Naive thymus-derived CD4-positive, alpha-beta T cell (primary cell): ENCODE measurements at regions of chr6 and their contacts with region 1.

Region 1: GRCh38 chr6:24933868-24934401 is 1.8 kb downstream of the RIPOR2 start:
- DNase-seq: peak in 7 of 9 donors; percentile 59 to 78 (median 72)
- ATAC-seq: peak; percentile 52
- H3K4me3 ChIP-seq: peak overlapping the region; percentile 89
- H3K4me3 Mint-ChIP-seq: peak overlapping the region; percentile 89 to 100 (median 98)
- H3K27ac ChIP-seq: peak overlapping the region; percentile 85
- H3K27ac Mint-ChIP-seq: peak overlapping the region; percentile 88 to 99 (median 93)
- H3K4me1 ChIP-seq: peaks cover 37 to 44% of the 10 kb centered on the region in 2 donors
- H3K4me1 Mint-ChIP-seq: peaks cover 44 to 65% (median 50%) of the 10 kb centered on the region in 7 donors
- H3K27me3 ChIP-seq: no peaks in the 10 kb centered on the region
- H3K27me3 Mint-ChIP-seq: no peaks in the 10 kb centered on the region

Region 2: GRCh38 chr6:24855395-24856245 is 78.3 kb before region 1 on chr6:
- CTCF ChIA-PET with region 1: interaction called, 40 read pairs
- POLR2A ChIA-PET with region 1: interaction called, 94 read pairs
- intact Hi-C with region 1: loop called (anchors 1 kb)
- DNase-seq: peak; percentile 25 to 83 (median 74)
- ATAC-seq: peak; percentile 78
- H3K4me3 ChIP-seq: no peak overlapping the region
- H3K4me3 Mint-ChIP-seq: peak overlapping the region in 8 of 10 donors; percentile 48 to 89 (median 62)
- H3K27ac ChIP-seq: peak overlapping the region; percentile 72
- H3K27ac Mint-ChIP-seq: peak overlapping the region; percentile 86 to 99 (median 94)
- H3K4me1 ChIP-seq: peaks cover 47 to 59% of the 10 kb centered on the region in 2 donors
- H3K4me1 Mint-ChIP-seq: peaks cover 51 to 72% (median 66%) of the 10 kb centered on the region in 7 donors
- H3K27me3 ChIP-seq: no peaks in the 10 kb centered on the region
- H3K27me3 Mint-ChIP-seq: no peaks in the 10 kb centered on the region

Region 3: GRCh38 chr6:24910961-24911712 is 22.8 kb before region 1 on chr6:
- CTCF ChIA-PET with region 1: interaction called, 53 read pairs
- POLR2A ChIA-PET with region 1: interaction called, 644 read pairs
- intact Hi-C with region 1: loop called (anchors 1 to 2 kb)
- DNase-seq: peak in 6 of 9 donors; percentile 37 to 67 (median 56)
- ATAC-seq: peak; percentile 60
- H3K4me3 ChIP-seq: peak overlapping the region; percentile 41
- H3K4me3 Mint-ChIP-seq: peak overlapping the region; percentile 92 to 97 (median 96)
- H3K27ac ChIP-seq: peak overlapping the region; percentile 75
- H3K27ac Mint-ChIP-seq: peak overlapping the region; percentile 88 to 99 (median 97)
- H3K4me1 ChIP-seq: peaks cover 88 to 93% of the 10 kb centered on the region in 2 donors
- H3K4me1 Mint-ChIP-seq: peaks cover 88 to 98% (median 97%) of the 10 kb centered on the region in 7 donors
- H3K27me3 ChIP-seq: no peaks in the 10 kb centered on the region
- H3K27me3 Mint-ChIP-seq: no peaks in the 10 kb centered on the region

Region 4: GRCh38 chr6:24960991-24961475 is 27.1 kb after region 1 on chr6:
- CTCF ChIA-PET with region 1: interaction called, 223 read pairs
- POLR2A ChIA-PET with region 1: interaction called, 1,484 read pairs
- intact Hi-C with region 1: loop called in 1 of 2 experiments (anchors 1 kb)
- DNase-seq: peak in 6 of 9 donors; percentile 46 to 70 (median 60)
- ATAC-seq: peak; percentile 80
- H3K4me3 ChIP-seq: peak overlapping the region; percentile 14
- H3K4me3 Mint-ChIP-seq: peak overlapping the region; percentile 46 to 81 (median 72)
- H3K27ac ChIP-seq: peak overlapping the region; percentile 64
- H3K27ac Mint-ChIP-seq: peak overlapping the region; percentile 44 to 97 (median 93)
- H3K4me1 ChIP-seq: peaks cover 70 to 74% of the 10 kb centered on the region in 2 donors
- H3K4me1 Mint-ChIP-seq: peaks cover 59 to 100% (median 90%) of the 10 kb centered on the region in 7 donors
- H3K27me3 ChIP-seq: no peaks in the 10 kb centered on the region
- H3K27me3 Mint-ChIP-seq: no peaks in the 10 kb centered on the region

Region 5: GRCh38 chr6:25006565-25007001 is 72.6 kb after region 1 on chr6:
- CTCF ChIA-PET with region 1: interaction called, 5 read pairs
- POLR2A ChIA-PET with region 1: interaction called, 84 read pairs
- intact Hi-C with region 1: loop called in 1 of 2 experiments (anchors 5 kb)
- DNase-seq: peak in 7 of 9 donors; percentile 30 to 51 (median 43)
- ATAC-seq: peak; percentile 80
- H3K4me3 ChIP-seq: peak overlapping the region; percentile 27
- H3K4me3 Mint-ChIP-seq: peak overlapping the region; percentile 56 to 84 (median 75)
- H3K27ac ChIP-seq: peak overlapping the region; percentile 64
- H3K27ac Mint-ChIP-seq: peak overlapping the region; percentile 85 to 94 (median 89)
- H3K4me1 ChIP-seq: peaks cover 46 to 50% of the 10 kb centered on the region in 2 donors
- H3K4me1 Mint-ChIP-seq: peaks cover 55 to 90% (median 86%) of the 10 kb centered on the region in 7 donors
- H3K27me3 ChIP-seq: no peaks in the 10 kb centered on the region
- H3K27me3 Mint-ChIP-seq: no peaks in the 10 kb centered on the region

Region 6: DNA sequence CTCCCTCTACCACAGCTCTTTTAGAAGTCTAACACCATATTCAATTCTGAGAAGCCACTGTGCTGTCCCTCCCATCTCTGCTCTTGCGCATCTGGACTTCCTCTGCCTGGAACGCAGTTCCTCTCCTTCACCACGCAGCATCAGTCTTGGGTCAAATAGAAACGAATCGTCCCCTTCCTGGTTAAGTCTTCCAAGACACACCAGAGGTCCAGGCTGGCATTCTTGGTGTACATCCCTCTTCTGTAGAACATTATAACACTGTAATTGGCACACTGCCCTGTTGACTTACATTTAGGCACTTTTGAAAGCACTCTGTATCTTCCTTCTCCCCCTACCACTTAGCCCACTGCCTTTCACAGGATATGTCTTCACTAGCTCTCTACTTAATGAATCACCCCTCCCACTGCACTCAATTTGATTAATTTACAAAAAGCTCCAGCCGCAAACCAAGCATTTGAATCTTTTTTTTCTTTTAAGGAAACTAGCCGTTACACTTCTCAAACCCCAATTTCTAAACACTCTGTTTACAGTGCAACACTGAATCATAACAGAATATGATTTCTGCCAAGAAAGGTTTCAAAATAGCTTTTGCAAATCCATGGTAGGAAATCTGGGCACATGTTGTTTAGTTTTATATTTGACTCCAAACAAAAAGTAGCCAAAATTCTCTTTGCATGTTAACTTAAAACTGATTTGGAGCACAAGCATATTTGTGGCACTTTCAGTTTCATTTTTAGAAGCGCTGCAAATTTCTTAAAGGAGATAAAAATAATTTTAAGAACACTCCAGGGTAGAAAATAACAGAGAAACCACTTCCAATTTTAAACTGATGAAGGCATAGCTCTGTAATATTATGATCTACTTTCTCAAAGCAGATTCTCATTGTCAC is 204.5 kb after region 1 on chr6:
- CTCF ChIA-PET with region 1: no interaction called
- POLR2A ChIA-PET with region 1: interaction called, 4 read pairs
- intact Hi-C with region 1: loop called in 1 of 2 experiments (anchors 5 kb)
- DNase-seq: peak; percentile 14 to 67 (median 60)
- ATAC-seq: peak; percentile 94
- H3K4me3 ChIP-seq: peak overlapping the region; percentile 61
- H3K4me3 Mint-ChIP-seq: peak overlapping the region; percentile 84 to 98 (median 92)
- H3K27ac ChIP-seq: peak overlapping the region; percentile 76
- H3K27ac Mint-ChIP-seq: peak overlapping the region; percentile 87 to 97 (median 96)
- H3K4me1 ChIP-seq: peaks cover 12 to 16% of the 10 kb centered on the region in 2 donors
- H3K4me1 Mint-ChIP-seq: peaks cover 22 to 45% (median 27%) of the 10 kb centered on the region in 7 donors
- H3K27me3 ChIP-seq: no peaks in the 10 kb centered on the region
- H3K27me3 Mint-ChIP-seq: no peaks in the 10 kb centered on the region